Activated CD4-positive, alpha-beta T cell treated with anti-CD3 and anti-CD28 coated beads for 36 hours (primary cell): ENCODE measurements at regions of chr21 and their contacts with region 1.

Region 1: DNA sequence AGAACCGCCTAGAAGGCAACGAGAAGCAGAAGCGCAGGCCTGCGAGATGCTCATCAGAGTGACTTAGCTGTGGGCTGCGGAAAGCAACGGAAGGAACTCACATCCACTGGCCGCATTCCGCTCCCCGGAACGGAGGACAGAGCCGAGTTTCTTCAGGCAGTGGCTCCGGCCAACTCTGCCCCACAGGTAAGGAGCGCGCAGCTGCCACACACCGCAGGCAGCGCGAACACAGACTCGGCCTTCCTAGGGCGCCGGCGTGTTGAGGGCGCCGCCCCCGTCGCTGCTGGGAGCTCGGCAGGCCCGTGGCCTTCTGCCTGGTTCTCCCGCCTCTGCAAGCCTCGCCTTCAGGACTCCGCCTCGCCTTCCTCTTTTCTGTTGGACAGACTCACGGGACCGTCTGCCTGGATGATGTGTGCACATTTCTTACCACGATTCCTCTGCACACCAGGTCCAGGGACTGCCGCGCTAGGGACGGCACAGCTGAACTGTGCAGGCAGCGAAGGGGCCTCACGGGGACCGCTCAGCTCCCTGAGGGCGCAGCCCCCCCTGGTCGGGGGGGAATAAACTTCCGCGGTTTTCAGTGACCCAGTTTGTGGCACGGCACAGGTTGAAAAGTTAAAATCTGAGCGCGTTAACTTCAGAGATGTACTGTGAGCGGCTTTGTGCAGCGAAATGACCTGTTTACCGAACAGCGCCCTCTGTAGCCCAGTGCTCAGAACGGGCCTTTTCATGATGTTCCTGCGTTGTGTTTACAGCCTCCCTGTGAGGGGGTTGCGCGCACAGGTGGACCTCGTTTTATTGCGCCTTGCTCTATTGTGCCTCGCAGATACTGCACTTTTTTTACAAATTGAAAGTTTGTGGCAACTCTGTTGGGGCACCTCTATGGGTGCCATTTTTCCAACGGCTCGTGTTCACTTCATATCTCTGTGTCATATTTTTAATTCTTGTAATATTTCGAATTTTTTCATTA is 15.8 kb downstream of the TCP10L start:
- DNase-seq: peak; percentile 91
- ATAC-seq: peak; percentile 96
- H3K4me3 Mint-ChIP-seq: peak overlapping the region; percentile 78
- H3K27ac Mint-ChIP-seq: peak overlapping the region; percentile 81
- H3K4me1 Mint-ChIP-seq: peaks cover 13% of the 10 kb centered on the region
- H3K27me3 Mint-ChIP-seq: no peaks in the 10 kb centered on the region

Region 2: DNA sequence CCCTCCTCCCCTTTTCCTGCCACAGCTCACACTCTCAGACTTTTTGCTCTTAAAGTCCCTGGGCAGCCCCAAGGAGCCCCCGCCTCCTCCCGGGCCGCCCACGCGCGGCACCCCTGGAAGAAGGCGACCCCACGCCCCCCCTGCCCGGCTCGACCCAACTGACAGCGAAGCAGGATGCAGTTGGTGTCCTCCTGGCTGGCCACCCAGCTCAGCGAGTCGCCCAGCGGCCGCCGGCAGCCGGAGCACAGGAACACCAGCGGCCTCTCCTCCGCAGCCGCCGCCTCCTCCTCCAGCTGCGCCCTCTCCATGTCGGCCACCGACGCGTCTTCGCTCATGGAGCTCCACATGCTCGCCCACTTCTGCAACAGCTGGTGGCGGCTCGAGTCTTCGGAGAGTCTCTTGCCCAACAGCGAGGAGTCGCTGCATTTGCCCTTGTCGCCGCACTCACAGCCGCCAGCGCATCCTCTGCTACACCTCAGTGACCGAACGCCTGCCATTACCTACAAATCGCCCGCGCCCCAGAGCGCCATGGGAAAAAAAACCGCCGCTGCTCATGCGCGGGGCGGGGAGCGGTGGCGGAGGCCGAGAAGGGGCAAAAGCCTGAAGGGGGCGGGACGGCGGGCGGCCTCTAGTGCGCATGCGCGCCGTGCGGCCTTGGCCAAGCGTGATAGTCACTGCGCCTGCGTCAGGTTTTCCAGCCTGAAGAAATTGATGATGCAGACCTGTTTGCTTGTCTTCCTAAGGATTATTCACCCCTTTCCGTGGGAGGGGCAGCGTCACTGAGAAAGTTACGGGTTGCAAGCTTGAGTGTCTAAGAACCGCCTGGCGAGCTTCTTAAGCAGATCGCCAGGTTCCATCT is 290.8 kb before region 1 on chr21 and contains the start of gene MIS18A:
- CTCF ChIA-PET with region 1: no interaction called
- POLR2A ChIA-PET with region 1: no interaction called
- intact Hi-C with region 1: loop called in 1 of 2 experiments (anchors 5 kb)
- DNase-seq: peak; percentile 98
- ATAC-seq: peak; percentile 90
- H3K4me3 Mint-ChIP-seq: peak within 1 kb of the TSS; percentile 86
- H3K27ac Mint-ChIP-seq: peak within 1 kb of the TSS; percentile 84
- H3K4me1 Mint-ChIP-seq: peaks cover 17% of the 10 kb centered on the region
- H3K27me3 Mint-ChIP-seq: no peaks in the 10 kb centered on the region
- total RNA-seq, gene MIS18A: 21.5 to 35.3 TPM

Region 3: DNA sequence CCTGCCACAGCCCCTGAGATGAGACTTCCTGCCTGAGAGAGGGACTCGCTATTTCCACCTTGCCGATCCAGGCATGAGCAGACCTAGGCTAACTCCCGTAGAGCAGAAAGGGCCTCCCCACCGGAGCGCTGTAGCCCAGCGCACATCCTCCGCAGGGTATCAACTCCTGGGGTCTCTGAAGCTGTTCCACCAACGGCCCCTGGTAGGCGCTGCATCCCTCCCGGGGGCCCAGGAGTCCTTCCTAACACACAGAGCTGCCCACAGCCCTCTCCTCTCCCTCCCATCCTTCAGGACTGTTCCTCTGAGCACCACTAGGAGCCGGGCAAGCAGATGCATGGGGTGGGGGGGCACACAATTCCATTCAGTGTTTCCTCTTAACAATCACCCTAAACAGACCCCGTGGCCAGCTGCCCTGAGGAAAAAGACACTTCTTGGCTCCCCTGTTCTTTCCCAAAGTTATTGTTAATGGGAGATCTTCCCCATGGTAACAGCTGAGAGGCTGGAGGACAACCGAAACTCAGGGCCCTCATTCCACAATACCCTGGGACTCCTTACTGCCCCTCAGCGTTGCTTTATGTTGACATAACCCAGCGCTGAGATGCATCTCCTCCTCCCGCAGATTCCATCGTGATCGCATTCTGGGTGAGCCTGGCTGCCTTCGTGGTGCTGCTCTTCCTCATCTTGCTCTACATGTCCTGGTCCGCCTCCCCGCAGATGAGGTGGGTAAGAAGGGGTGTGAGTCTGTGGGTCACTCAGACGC is 263.3 kb before region 1 on chr21:
- CTCF ChIA-PET with region 1: no interaction called
- POLR2A ChIA-PET with region 1: no interaction called
- intact Hi-C with region 1: no loop called
- DNase-seq: no peak
- ATAC-seq: no peak
- H3K4me3 Mint-ChIP-seq: no peak overlapping the region
- H3K27ac Mint-ChIP-seq: no peak overlapping the region
- H3K4me1 Mint-ChIP-seq: peaks cover 5% of the 10 kb centered on the region
- H3K27me3 Mint-ChIP-seq: no peaks in the 10 kb centered on the region

Region 4: DNA sequence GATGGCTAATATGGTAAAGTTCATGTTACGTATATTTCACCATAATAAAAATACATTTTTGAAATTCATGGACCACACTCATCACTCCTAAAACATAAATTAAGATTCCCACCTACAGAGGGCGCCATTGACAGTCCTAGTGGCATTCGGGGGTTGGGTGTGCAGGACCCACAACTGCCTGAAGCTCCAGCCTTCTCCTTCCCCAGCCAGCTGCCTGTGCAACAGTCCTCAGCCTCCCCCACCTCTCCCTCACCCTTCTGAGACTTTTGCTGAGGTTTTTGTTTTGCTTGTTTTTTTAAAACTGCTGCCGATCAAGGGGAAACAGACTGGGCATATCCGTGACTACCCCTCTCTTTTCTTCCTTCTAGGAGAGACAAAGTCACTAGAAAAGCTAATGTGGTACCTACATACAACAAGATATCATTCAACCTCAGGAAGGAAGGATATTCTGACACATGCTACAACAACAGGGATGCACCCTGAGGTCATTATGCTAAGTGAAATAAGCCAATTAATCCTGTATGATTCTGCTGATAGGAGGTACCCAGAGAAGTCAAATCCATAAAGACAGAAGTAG is 166.3 kb before region 1 on chr21:
- CTCF ChIA-PET with region 1: interaction called, 67 read pairs
- POLR2A ChIA-PET with region 1: no interaction called
- intact Hi-C with region 1: loop called (anchors 1 kb)
- DNase-seq: peak; percentile 77
- ATAC-seq: peak; percentile 92
- H3K4me3 Mint-ChIP-seq: no peak overlapping the region
- H3K27ac Mint-ChIP-seq: no peak overlapping the region
- H3K4me1 Mint-ChIP-seq: peaks cover 7% of the 10 kb centered on the region
- H3K27me3 Mint-ChIP-seq: no peaks in the 10 kb centered on the region

Region 5: GRCh38 chr21:32412162-32413014 is 157.2 kb before region 1 on chr21 and contains the start of gene EVA1C:
- CTCF ChIA-PET with region 1: interaction called, 19 read pairs
- POLR2A ChIA-PET with region 1: no interaction called
- intact Hi-C with region 1: loop called in 1 of 2 experiments (anchors 1 kb)
- DNase-seq: peak; percentile 80
- ATAC-seq: peak; percentile 68
- H3K4me3 Mint-ChIP-seq: peak within 1 kb of the TSS; percentile 94
- H3K27ac Mint-ChIP-seq: peak within 1 kb of the TSS; percentile 97
- H3K4me1 Mint-ChIP-seq: peaks cover 28% of the 10 kb centered on the region
- H3K27me3 Mint-ChIP-seq: no peaks in the 10 kb centered on the region
- total RNA-seq, gene EVA1C: 9.3 to 10.4 TPM

Region 6: DNA sequence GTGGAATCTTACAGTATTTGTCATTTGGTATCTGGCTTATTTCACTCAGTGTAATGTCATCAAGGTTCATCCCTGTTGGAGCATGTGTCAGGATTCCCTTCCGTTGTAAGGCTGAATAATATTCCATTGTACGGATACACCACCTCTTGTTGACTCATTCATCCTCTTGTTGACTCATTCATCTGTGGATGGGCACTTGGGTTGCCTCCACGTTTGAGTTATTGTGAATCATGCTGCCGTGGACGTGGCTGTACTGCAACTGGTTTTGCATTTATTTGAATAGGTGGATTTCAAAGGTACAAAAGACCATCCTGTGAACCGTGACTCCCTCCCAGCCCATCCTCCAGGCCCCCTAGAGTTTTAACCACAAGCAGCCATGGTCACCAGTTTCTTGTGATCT is 27.7 kb after region 1 on chr21:
- CTCF ChIA-PET with region 1: interaction called, 12 read pairs
- POLR2A ChIA-PET with region 1: interaction called, 7 read pairs
- intact Hi-C with region 1: loop called in 1 of 2 experiments (anchors 2 kb)
- DNase-seq: peak; percentile 39
- ATAC-seq: peak; percentile 50
- H3K4me3 Mint-ChIP-seq: no peak overlapping the region
- H3K27ac Mint-ChIP-seq: peak overlapping the region; percentile 71
- H3K4me1 Mint-ChIP-seq: peaks cover 12% of the 10 kb centered on the region
- H3K27me3 Mint-ChIP-seq: no peaks in the 10 kb centered on the region

Region 7: DNA sequence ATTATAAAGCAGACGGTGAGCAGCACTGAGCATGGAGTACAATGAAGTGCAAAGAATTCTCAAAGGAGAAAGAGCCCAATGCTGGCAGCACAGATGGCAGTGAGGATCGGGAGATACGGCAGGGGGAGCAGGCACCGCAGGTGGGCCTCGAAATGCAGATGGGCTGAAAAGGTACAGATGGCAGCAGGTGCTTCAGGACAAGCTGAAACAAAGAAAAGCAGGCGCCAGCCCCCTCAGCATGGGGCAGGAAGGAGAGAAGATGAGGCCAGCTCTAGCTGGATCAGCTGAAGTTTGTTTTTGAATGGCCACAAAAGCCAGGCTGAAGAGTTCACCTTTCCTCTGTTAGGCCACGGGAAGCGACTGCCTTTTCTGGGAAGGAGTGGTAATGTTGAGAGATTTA is 34.9 kb after region 1 on chr21:
- CTCF ChIA-PET with region 1: interaction called, 12 read pairs
- POLR2A ChIA-PET with region 1: interaction called, 7 read pairs
- intact Hi-C with region 1: loop called in 1 of 2 experiments (anchors 2 kb)
- DNase-seq: no peak
- ATAC-seq: no peak
- H3K4me3 Mint-ChIP-seq: no peak overlapping the region
- H3K27ac Mint-ChIP-seq: no peak overlapping the region
- H3K4me1 Mint-ChIP-seq: no peaks in the 10 kb centered on the region
- H3K27me3 Mint-ChIP-seq: no peaks in the 10 kb centered on the region

Region 8: GRCh38 chr21:32612075-32612998 is 42.8 kb after region 1 on chr21 and contains the start of gene CFAP298:
- CTCF ChIA-PET with region 1: interaction called, 3 read pairs
- POLR2A ChIA-PET with region 1: no interaction called
- intact Hi-C with region 1: loop called in 1 of 2 experiments (anchors 2 kb)
- DNase-seq: peak; percentile 92
- ATAC-seq: peak; percentile 90
- H3K4me3 Mint-ChIP-seq: peak within 1 kb of the TSS; percentile 96
- H3K27ac Mint-ChIP-seq: peak within 1 kb of the TSS; percentile 90
- H3K4me1 Mint-ChIP-seq: peaks cover 9% of the 10 kb centered on the region
- H3K27me3 Mint-ChIP-seq: no peaks in the 10 kb centered on the region
- total RNA-seq, gene CFAP298: 39.5 to 47.9 TPM

Region 9: GRCh38 chr21:33136847-33137522 is 567.4 kb after region 1 on chr21:
- CTCF ChIA-PET with region 1: no interaction called
- POLR2A ChIA-PET with region 1: no interaction called
- intact Hi-C with region 1: no loop called
- DNase-seq: no peak
- ATAC-seq: no peak
- H3K4me3 Mint-ChIP-seq: no peak overlapping the region
- H3K27ac Mint-ChIP-seq: no peak overlapping the region
- H3K4me1 Mint-ChIP-seq: no peaks in the 10 kb centered on the region
- H3K27me3 Mint-ChIP-seq: no peaks in the 10 kb centered on the region